Posterior vena cava (tissue), 2 donors: ENCODE measurements at regions of chr1 and their contacts with region 1.

Region 1: GRCh38 chr1:10378081-10378841 is 20.6 kb upstream of the PGD start:
- DNase-seq: peak; percentile 89

Region 2: GRCh38 chr1:10415211-10415930 is 37.1 kb after region 1 on chr1:
- intact Hi-C with region 1: loop called in 1 of 2 experiments (anchors 1 kb)
- DNase-seq: no peak

Region 3: DNA sequence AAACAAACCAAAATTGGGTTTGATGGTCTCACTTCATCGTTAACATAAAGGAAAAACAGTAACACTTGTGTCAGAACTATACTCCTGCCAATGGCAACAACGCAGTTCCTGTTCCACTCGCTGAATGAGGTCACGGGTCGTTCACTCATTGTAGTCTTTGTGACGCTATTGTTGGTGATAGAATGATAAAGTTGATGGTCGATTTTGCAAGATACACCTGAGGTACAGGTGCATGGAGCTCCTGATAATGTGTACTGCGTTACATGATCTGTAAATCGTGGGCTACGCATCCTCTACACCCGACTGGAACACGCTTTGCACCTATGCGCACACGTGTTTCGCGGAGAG is 51.6 kb after region 1 on chr1:
- intact Hi-C with region 1: loop called (anchors 5 kb)
- DNase-seq: no peak

Region 4: DNA sequence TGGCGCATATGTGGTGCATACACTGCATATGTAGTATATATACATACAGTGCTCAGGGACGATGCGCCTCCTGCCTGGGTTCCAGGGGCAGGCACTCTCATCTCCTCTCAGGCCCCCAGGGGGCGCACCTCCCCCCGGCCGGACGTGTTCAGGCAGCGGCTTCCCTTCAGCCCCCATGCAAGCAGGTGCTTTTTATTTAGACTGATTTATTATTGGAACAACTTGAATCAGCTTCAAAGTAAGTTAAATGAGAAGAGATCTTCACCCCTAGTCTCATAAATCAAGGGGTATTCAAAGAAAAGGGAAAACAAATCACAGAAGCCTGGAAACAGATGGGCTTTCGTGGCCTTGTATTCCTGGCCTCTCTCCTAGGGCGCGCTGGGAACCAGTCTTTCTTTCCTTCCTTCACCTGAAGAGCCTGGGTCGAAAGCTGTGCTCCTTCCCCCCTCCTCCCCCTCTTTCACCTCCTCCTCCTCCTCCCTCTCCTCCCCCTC is 959.4 kb after region 1 on chr1:
- intact Hi-C with region 1: no loop called
- DNase-seq: no peak